ENCODE measurements at regions of chr12 and their contacts with region 1.

Region 1: GRCh38 chr12:92145731-92146496 is at the start of gene BTG1:
- DNase-seq: peak; percentile 92 to 99 (median 96)
- ATAC-seq: peak; percentile 76
- H3K4me3 ChIP-seq: peak within 1 kb of the TSS; percentile 88
- H3K27ac ChIP-seq: peak within 1 kb of the TSS; percentile 87
- H3K4me1 ChIP-seq: peaks cover 20 to 25% of the 10 kb centered on the region in 2 experiments
- H3K27me3 ChIP-seq: no peaks in the 10 kb centered on the region
- CTCF ChIP-seq: no peak
- EP300 ChIP-seq: peak; percentile 43
- POLR2A ChIP-seq: peak; percentile 100
- RAD21 ChIP-seq: peak; percentile 16 to 17; a peak in 2 of 4 replicates
- polyA plus RNA-seq, gene BTG1: 3.7 to 4.3 TPM

Region 2: GRCh38 chr12:91630596-91631293 is 515.2 kb before region 1 on chr12:
- CTCF ChIA-PET with region 1: no interaction called
- POLR2A ChIA-PET with region 1: interaction called, 13 read pairs
- in situ Hi-C with region 1: no loop called
- intact Hi-C with region 1: no loop called
- DNase-seq: peak in 1 of 4 experiments; percentile 51
- ATAC-seq: no peak
- H3K4me3 ChIP-seq: no peak overlapping the region
- H3K27ac ChIP-seq: peak overlapping the region; percentile 53; the same call in 1 of the 3 replicates
- H3K4me1 ChIP-seq: peaks cover 13 to 15% of the 10 kb centered on the region in 2 experiments; a peak in 4 of 5 replicates
- H3K27me3 ChIP-seq: no peaks in the 10 kb centered on the region
- CTCF ChIP-seq: no peak
- EP300 ChIP-seq: no peak
- POLR2A ChIP-seq: no peak
- RAD21 ChIP-seq: no peak

Region 3: DNA sequence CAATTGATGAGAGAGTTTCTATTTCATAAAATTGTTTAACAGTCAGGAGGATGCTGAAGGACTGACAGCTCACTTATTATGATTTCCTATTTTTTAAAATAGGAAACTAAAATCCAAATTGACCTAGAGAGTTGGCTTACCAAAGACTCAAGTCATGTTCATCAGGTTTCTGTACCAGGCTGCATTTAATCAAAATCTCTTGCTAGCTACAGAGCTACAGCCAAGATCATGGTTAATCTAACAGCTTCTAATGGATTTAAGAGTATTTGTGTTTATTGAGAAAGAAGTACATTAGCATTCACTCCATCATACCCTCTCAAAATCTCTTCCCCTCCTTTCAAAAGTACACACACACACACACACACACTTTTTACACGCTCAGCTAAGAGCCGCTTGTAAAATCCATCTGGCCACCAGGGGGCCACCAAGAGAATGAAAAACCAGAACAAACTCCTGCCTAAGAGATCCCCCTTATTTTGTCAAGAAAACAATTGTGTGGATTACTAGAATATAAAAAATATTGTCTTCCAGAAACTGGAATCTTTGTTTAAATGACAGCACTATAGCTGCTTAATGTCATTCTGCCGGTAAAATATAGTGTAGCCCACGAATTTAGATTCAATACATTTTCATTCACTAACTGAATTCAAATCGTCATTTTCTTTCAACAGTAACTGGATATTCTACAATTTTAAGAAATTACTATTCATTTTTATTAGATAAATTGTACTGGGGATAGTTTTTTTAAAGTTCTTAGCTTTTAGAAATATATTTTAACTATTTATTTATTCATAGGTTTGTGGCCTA is 334.2 kb before region 1 on chr12:
- CTCF ChIA-PET with region 1: interaction called, 3 read pairs
- POLR2A ChIA-PET with region 1: interaction called, 18 read pairs
- in situ Hi-C with region 1: no loop called
- intact Hi-C with region 1: loop called (anchors 5 kb)
- DNase-seq: peak; percentile 36 to 65 (median 55)
- ATAC-seq: peak; percentile 90
- H3K4me3 ChIP-seq: no peak overlapping the region
- H3K27ac ChIP-seq: no peak overlapping the region
- H3K4me1 ChIP-seq: no peaks in the 10 kb centered on the region
- H3K27me3 ChIP-seq: no peaks in the 10 kb centered on the region
- CTCF ChIP-seq: peak; percentile 53 to 74 (median 64)
- EP300 ChIP-seq: no peak
- POLR2A ChIP-seq: no peak
- RAD21 ChIP-seq: peak; percentile 63 to 65

Region 4: DNA sequence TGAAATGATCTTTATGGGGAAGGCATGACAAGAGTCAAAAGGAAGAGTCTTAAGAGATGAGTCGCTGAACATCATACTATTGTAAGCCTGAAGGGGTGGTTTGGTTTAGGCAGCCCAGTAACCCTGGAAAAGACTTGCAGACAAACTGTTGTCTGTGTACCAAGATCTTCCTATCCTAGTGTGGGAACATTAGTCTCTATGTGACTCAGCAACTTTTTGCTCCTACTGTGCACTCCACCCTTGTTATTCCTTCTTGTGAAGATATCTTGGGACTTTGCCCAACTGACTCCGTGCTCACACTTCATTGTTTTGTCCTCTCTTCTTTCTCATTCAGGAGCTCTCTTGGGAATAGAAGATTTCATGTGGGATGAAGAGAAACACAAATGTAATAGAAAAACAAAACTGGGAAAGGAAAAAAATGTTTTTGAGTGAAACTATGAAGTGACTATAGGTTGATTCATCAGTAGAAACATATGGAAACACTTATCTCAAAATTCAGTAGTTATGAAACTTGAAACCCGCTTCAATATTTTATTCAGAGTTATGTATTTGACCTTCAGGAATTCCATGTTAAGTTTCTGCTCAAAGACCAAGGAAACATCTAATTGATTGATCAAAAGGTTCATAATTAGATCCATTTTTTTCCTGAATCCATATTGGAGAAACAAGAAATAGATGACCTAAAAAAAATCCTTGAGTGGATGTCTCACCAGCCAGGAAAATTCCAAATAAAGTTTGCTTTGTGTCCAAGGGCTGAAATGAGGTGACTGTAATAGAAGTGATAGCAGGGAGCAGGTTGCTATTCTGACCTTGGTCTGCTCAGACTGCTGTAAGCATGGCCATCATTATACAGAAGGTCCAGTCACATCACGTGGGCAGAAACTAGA is 67.5 kb before region 1 on chr12:
- CTCF ChIA-PET with region 1: no interaction called
- POLR2A ChIA-PET with region 1: interaction called, 9 read pairs
- in situ Hi-C with region 1: no loop called
- intact Hi-C with region 1: loop called (anchors 5 kb)
- DNase-seq: peak; percentile 54 to 83 (median 60)
- ATAC-seq: peak; percentile 89
- H3K4me3 ChIP-seq: no peak overlapping the region
- H3K27ac ChIP-seq: peak overlapping the region; percentile 61
- H3K4me1 ChIP-seq: peaks cover 0 to 49% of the 10 kb centered on the region in 2 experiments; a peak in 3 of 5 replicates
- H3K27me3 ChIP-seq: no peaks in the 10 kb centered on the region
- CTCF ChIP-seq: no peak
- EP300 ChIP-seq: peak; percentile 58
- POLR2A ChIP-seq: no peak
- RAD21 ChIP-seq: no peak

Region 5: GRCh38 chr12:92158796-92159439 is 13.0 kb after region 1 on chr12:
- CTCF ChIA-PET with region 1: no interaction called
- POLR2A ChIA-PET with region 1: interaction called, 26 read pairs
- in situ Hi-C with region 1: no loop called
- intact Hi-C with region 1: no loop called
- DNase-seq: no peak
- ATAC-seq: no peak
- H3K4me3 ChIP-seq: no peak overlapping the region
- H3K27ac ChIP-seq: no peak overlapping the region
- H3K4me1 ChIP-seq: peaks cover 0 to 13% of the 10 kb centered on the region in 2 experiments; a peak in 3 of 5 replicates
- H3K27me3 ChIP-seq: no peaks in the 10 kb centered on the region
- CTCF ChIP-seq: no peak
- EP300 ChIP-seq: no peak
- POLR2A ChIP-seq: no peak
- RAD21 ChIP-seq: no peak

Region 6: GRCh38 chr12:92341065-92341668 is 195.3 kb after region 1 on chr12:
- CTCF ChIA-PET with region 1: no interaction called
- POLR2A ChIA-PET with region 1: interaction called, 7 read pairs
- in situ Hi-C with region 1: no loop called
- intact Hi-C with region 1: loop called (anchors 5 kb)
- DNase-seq: peak in 2 of 4 experiments; percentile 31 to 69
- ATAC-seq: peak; percentile 86
- H3K4me3 ChIP-seq: peak overlapping the region; percentile 12; the same call in 1 of the 2 replicates
- H3K27ac ChIP-seq: peak overlapping the region; percentile 78
- H3K4me1 ChIP-seq: peaks cover 4 to 30% of the 10 kb centered on the region in 2 experiments; a peak in 4 of 5 replicates
- H3K27me3 ChIP-seq: no peaks in the 10 kb centered on the region
- CTCF ChIP-seq: no peak
- EP300 ChIP-seq: peak; percentile 74
- POLR2A ChIP-seq: no peak
- RAD21 ChIP-seq: peak in 1 of 2 experiments; percentile 19; a peak in 1 of 4 replicates

Region 7: GRCh38 chr12:92570056-92570753 is 424.3 kb after region 1 on chr12:
- CTCF ChIA-PET with region 1: interaction called, 4 read pairs
- POLR2A ChIA-PET with region 1: interaction called, 24 read pairs
- in situ Hi-C with region 1: loop called (anchors 5 kb)
- intact Hi-C with region 1: loop called (anchors 1 kb)
- DNase-seq: peak; percentile 44 to 84 (median 47)
- ATAC-seq: peak; percentile 85
- H3K4me3 ChIP-seq: no peak overlapping the region
- H3K27ac ChIP-seq: no peak overlapping the region
- H3K4me1 ChIP-seq: no peaks in the 10 kb centered on the region
- H3K27me3 ChIP-seq: no peaks in the 10 kb centered on the region
- CTCF ChIP-seq: peak; percentile 53 to 77 (median 73); a peak in 5 of 6 replicates
- EP300 ChIP-seq: no peak
- POLR2A ChIP-seq: no peak
- RAD21 ChIP-seq: peak; percentile 97 to 98